Dendritic cell treated with granulocyte-macrophage colony-stimulating factor and Interleukin-4, amounts not matched to agents 40 ng/mL and 50 ng/mL, for 4 days (primary cell): ENCODE measurements at regions of chr7 and their contacts with region 1.

Region 1: GRCh38 chr7:25894902-25895791 is 256.9 kb upstream of the NFE2L3 start:
- H3K4me3 Mint-ChIP-seq: peak overlapping the region; percentile 55
- H3K27ac Mint-ChIP-seq: peak overlapping the region; percentile 49
- H3K4me1 Mint-ChIP-seq: peaks cover 43% of the 10 kb centered on the region
- H3K27me3 Mint-ChIP-seq: peaks cover 72% of the 10 kb centered on the region

Region 2: GRCh38 chr7:25777969-25778708 is 117.0 kb before region 1 on chr7:
- intact Hi-C with region 1: no loop called
- H3K4me3 Mint-ChIP-seq: no peak overlapping the region
- H3K27ac Mint-ChIP-seq: no peak overlapping the region
- H3K4me1 Mint-ChIP-seq: no peaks in the 10 kb centered on the region
- H3K27me3 Mint-ChIP-seq: no peaks in the 10 kb centered on the region

Region 3: GRCh38 chr7:26061688-26062150 is 166.6 kb after region 1 on chr7:
- intact Hi-C with region 1: loop called (anchors 2 kb)
- H3K4me3 Mint-ChIP-seq: no peak overlapping the region
- H3K27ac Mint-ChIP-seq: no peak overlapping the region
- H3K4me1 Mint-ChIP-seq: no peaks in the 10 kb centered on the region
- H3K27me3 Mint-ChIP-seq: peaks cover 81% of the 10 kb centered on the region

Region 4: DNA sequence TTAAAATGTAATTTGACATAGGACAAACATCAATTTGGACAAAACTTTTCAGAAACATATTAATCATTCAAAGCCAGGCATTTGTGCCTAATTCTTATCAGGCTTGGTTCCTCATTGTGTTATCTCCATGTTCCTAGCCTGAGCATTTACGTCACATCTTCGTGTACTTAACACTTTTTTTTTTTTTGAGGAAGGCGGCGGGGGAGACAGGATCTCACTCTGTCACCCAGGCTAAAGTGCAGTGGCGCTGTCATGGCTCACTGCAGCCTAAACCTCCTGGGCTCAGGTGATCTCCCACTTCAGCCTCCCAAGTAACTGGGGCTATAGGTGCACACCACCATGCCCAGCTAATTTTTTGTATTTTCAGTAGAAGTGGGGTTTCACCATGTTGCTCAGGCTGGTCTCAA is 285.6 kb after region 1 on chr7:
- intact Hi-C with region 1: no loop called
- H3K4me3 Mint-ChIP-seq: no peak overlapping the region
- H3K27ac Mint-ChIP-seq: no peak overlapping the region
- H3K4me1 Mint-ChIP-seq: peaks cover 14% of the 10 kb centered on the region
- H3K27me3 Mint-ChIP-seq: no peaks in the 10 kb centered on the region

Region 5: DNA sequence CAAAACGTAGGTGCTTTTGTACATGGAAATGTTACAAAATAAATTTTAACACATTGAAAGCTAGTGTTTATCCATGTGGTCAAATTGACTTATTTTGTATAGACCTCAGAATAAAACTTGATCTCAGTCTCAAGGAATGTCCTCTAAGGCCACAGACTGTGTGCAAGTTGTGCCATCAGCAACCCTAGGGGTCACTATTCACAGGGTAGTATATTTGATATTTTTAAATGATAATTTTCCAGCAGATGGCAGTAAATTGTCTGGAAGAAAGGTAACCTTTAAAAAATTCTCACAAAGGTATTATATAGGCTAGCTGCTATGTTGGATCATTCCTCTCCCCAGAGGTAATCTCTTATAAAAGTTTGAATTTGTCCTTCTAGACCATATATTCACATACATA is 383.6 kb after region 1 on chr7:
- intact Hi-C with region 1: loop called (anchors 5 kb)
- H3K4me3 Mint-ChIP-seq: no peak overlapping the region
- H3K27ac Mint-ChIP-seq: no peak overlapping the region
- H3K4me1 Mint-ChIP-seq: no peaks in the 10 kb centered on the region
- H3K27me3 Mint-ChIP-seq: peaks cover 1% of the 10 kb centered on the region

Region 6: DNA sequence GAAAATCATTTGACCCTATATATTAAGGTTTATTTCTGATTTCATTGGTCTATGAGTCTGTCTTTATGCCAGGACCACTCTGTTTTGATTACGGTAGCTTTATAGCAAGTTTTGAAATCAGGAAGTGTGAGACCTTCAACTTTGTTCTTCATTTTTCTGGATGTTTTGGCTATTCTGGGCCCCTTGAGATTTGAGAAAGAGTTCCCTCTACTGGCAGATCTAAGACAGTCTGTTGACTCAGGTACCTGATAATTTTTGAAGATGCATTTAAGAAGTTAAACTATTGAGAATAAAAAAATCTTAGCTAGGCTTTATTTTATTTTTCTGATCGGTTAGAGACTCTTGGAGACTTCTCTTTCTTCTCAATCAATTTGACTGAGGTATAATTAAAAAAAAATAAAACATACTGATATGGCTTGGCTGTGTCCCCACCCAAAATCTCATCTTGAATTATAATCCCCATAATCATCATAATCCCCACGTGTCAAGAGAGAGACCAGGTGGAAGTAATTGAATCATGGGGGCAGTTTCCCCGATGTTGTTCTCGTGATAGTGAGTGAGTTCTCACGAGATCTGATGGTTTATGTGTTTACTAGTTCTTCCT is 605.7 kb after region 1 on chr7:
- intact Hi-C with region 1: loop called (anchors 10 kb)
- H3K4me3 Mint-ChIP-seq: no peak overlapping the region
- H3K27ac Mint-ChIP-seq: no peak overlapping the region
- H3K4me1 Mint-ChIP-seq: no peaks in the 10 kb centered on the region
- H3K27me3 Mint-ChIP-seq: peaks cover 8% of the 10 kb centered on the region

Region 7: GRCh38 chr7:26853788-26854393 is 958.7 kb after region 1 on chr7:
- intact Hi-C with region 1: loop called (anchors 10 kb)
- H3K4me3 Mint-ChIP-seq: no peak overlapping the region
- H3K27ac Mint-ChIP-seq: no peak overlapping the region
- H3K4me1 Mint-ChIP-seq: peaks cover 17% of the 10 kb centered on the region
- H3K27me3 Mint-ChIP-seq: peaks cover 8% of the 10 kb centered on the region